HepG2 (cell line): ENCODE measurements at regions of chr1 and their contacts with region 1.

Region 1: GRCh38 chr1:175481126-175482066 is 262.0 kb downstream of the TNR start:
- DNase-seq: no peak
- ATAC-seq: peak; percentile 66
- H3K4me3 ChIP-seq: no peak overlapping the region
- H3K27ac ChIP-seq: no peak overlapping the region
- H3K4me1 ChIP-seq: no peaks in the 10 kb centered on the region
- H3K27me3 ChIP-seq: no peaks in the 10 kb centered on the region
- CTCF ChIP-seq: peak; percentile 62
- EP300 ChIP-seq: no peak
- POLR2A ChIP-seq: no peak
- RAD21 ChIP-seq: no peak

Region 2: GRCh38 chr1:175865041-175865766 is 383.8 kb after region 1 on chr1:
- CTCF ChIA-PET with region 1: no interaction called
- POLR2A ChIA-PET with region 1: no interaction called
- in situ Hi-C with region 1: no loop called
- intact Hi-C with region 1: loop called (anchors 10 kb)
- DNase-seq: no peak
- ATAC-seq: no peak
- H3K4me3 ChIP-seq: no peak overlapping the region
- H3K27ac ChIP-seq: no peak overlapping the region
- H3K4me1 ChIP-seq: no peaks in the 10 kb centered on the region
- H3K27me3 ChIP-seq: peaks cover 0 to 8% of the 10 kb centered on the region in 2 experiments; a peak in 2 of 5 replicates
- CTCF ChIP-seq: no peak
- EP300 ChIP-seq: no peak
- POLR2A ChIP-seq: no peak
- RAD21 ChIP-seq: no peak

Region 3: GRCh38 chr1:175893192-175893591 is 411.8 kb after region 1 on chr1:
- CTCF ChIA-PET with region 1: no interaction called
- POLR2A ChIA-PET with region 1: no interaction called
- in situ Hi-C with region 1: no loop called
- intact Hi-C with region 1: loop called (anchors 5 kb)
- DNase-seq: no peak
- ATAC-seq: no peak
- H3K4me3 ChIP-seq: no peak overlapping the region
- H3K27ac ChIP-seq: no peak overlapping the region
- H3K4me1 ChIP-seq: no peaks in the 10 kb centered on the region
- H3K27me3 ChIP-seq: peaks cover 0 to 2% of the 10 kb centered on the region in 2 experiments; a peak in 1 of 5 replicates
- CTCF ChIP-seq: no peak
- EP300 ChIP-seq: no peak
- POLR2A ChIP-seq: no peak
- RAD21 ChIP-seq: no peak